Esophagus squamous epithelium (tissue), 5 donors: ENCODE measurements at regions of chr20 and their contacts with region 1.

Region 1: GRCh38 chr20:57596998-57597939 is 23.0 kb downstream of the ZBP1 start:
- DNase-seq: peak; percentile 19
- H3K4me3 ChIP-seq: peak overlapping the region in 2 of 4 donors; percentile 21 to 43
- H3K27ac ChIP-seq: no peak overlapping the region
- H3K4me1 ChIP-seq: peaks cover 5 to 27% (median 9%) of the 10 kb centered on the region in 3 donors
- H3K27me3 ChIP-seq: peaks cover 0 to 11% (median 0%) of the 10 kb centered on the region in 4 donors
- CTCF ChIP-seq: peak; percentile 92 to 98 (median 94)
- POLR2A ChIP-seq: no peak

Region 2: DNA sequence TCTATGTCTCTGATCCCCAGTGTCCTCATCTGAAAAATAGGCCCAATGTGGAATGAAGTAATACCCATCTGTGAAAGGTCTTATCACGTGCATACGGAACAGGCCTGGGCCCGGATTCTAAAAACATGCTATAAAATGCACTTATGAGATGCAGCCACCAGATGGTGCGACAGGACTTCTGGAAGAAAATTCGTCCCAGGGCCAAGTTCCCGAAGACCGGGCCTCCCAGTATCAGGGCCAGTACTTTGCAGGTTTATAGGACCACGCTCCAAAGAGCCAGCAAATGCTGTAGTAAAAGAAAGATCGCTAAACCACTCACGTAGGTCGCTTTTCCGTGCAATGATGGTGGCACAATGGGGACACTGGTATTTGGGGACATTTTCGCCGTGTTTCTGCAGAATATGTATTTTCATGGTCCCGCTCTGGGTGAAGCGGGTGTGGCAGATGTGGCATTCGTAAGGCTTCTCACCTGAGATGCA is 83.0 kb before region 1 on chr20:
- intact Hi-C with region 1: loop called (anchors 2 kb)
- DNase-seq: no peak
- H3K4me3 ChIP-seq: no peak overlapping the region
- H3K27ac ChIP-seq: no peak overlapping the region
- H3K4me1 ChIP-seq: peaks cover 0 to 10% (median 0%) of the 10 kb centered on the region in 3 donors
- H3K27me3 ChIP-seq: peaks cover 0 to 5% (median 0%) of the 10 kb centered on the region in 4 donors
- CTCF ChIP-seq: peak; percentile 47 to 92 (median 86)
- POLR2A ChIP-seq: no peak

Region 3: DNA sequence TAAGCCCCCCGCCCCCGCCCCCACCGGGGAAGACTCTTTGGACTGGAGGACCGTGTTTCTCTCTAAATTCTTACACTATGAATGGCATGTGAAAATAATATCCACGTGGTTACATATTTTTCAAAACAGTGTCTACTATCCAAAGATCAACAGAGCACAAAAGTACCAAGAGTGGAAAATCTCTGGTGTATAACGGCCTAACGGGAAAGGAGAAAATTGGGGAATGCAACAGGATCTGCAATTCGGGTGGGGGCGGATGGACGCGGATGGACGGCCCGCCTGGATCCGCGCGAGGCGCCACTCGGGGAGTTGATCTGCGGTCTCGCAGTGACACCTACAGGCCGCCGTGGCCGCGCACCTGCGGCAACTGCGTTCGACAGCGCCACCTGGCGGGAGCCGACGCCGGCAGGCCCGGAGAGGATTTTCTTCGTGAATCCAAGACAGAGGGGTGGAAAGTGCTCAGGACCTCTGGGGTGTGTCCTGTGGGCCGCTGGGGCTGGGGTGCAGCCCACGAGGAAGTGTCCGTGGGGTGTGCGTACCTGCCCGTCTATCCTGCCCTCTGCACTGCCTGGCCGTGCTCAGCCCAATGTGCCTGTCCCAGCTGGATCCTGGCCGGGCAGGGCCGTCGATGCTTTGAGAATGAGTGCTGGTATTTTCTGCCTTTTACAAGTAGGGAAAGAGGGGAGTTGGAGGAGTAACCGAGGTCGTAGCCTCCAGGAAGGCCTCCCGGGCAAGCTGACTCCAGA is 612.6 kb after region 1 on chr20:
- intact Hi-C with region 1: loop called (anchors 2 kb)
- DNase-seq: peak; percentile 25
- H3K4me3 ChIP-seq: no peak overlapping the region
- H3K27ac ChIP-seq: no peak overlapping the region
- H3K4me1 ChIP-seq: peaks cover 0 to 8% (median 0%) of the 10 kb centered on the region in 3 donors
- H3K27me3 ChIP-seq: peaks cover 0 to 46% (median 0%) of the 10 kb centered on the region in 4 donors
- CTCF ChIP-seq: peak; percentile 99 to 100 (median 100)
- POLR2A ChIP-seq: no peak